Ovary (tissue), 10 donors: ENCODE measurements at regions of chr3 and their contacts with region 1.

Region 1: GRCh38 chr3:118828351-118828750 is 206.3 kb downstream of the IGSF11 start:
- DNase-seq: no peak
- H3K4me3 ChIP-seq: no peak overlapping the region
- H3K27ac ChIP-seq: no peak overlapping the region
- H3K4me1 ChIP-seq: no peaks in the 10 kb centered on the region
- H3K27me3 ChIP-seq: no peaks in the 10 kb centered on the region
- CTCF ChIP-seq: no peak
- EP300 ChIP-seq: no peak
- POLR2A ChIP-seq: no peak

Region 2: GRCh38 chr3:117454254-117454653 is 1374.1 kb before region 1 on chr3:
- intact Hi-C with region 1: loop called in 1 of 4 experiments (anchors 10 kb)
- DNase-seq: no peak
- H3K4me3 ChIP-seq: no peak overlapping the region
- H3K27ac ChIP-seq: no peak overlapping the region
- H3K4me1 ChIP-seq: no peaks in the 10 kb centered on the region
- H3K27me3 ChIP-seq: no peaks in the 10 kb centered on the region
- CTCF ChIP-seq: no peak
- EP300 ChIP-seq: no peak
- POLR2A ChIP-seq: no peak

Region 3: DNA sequence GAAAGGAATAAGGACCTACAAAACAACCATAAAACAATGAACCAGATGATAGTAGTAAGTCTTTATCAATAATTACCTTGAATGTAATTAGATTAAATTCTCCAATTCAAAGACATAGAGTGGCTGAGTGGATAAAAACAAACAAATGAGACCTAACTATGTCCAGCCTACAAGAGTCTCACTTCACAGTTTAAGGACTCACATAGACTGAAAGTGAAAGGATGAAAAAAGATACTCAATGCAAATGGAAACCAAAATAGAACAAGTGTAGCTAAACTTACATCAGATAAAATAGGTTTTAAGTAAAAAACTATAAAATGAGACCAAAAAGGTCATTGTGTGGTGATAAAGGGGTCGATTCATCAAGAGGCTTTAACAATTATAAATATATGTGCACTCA is 931.6 kb after region 1 on chr3:
- intact Hi-C with region 1: no loop called
- DNase-seq: no peak
- H3K4me3 ChIP-seq: no peak overlapping the region
- H3K27ac ChIP-seq: no peak overlapping the region
- H3K4me1 ChIP-seq: no peaks in the 10 kb centered on the region
- H3K27me3 ChIP-seq: no peaks in the 10 kb centered on the region
- CTCF ChIP-seq: no peak
- EP300 ChIP-seq: no peak
- POLR2A ChIP-seq: no peak